Left ventricle myocardium superior (tissue), 1 donor: ENCODE measurements at regions of chr6 and their contacts with region 1.

Region 1: GRCh38 chr6:135145063-135145800 is 35.9 kb upstream of the MYB start:
- DNase-seq: no peak
- ATAC-seq: no peak

Region 2: DNA sequence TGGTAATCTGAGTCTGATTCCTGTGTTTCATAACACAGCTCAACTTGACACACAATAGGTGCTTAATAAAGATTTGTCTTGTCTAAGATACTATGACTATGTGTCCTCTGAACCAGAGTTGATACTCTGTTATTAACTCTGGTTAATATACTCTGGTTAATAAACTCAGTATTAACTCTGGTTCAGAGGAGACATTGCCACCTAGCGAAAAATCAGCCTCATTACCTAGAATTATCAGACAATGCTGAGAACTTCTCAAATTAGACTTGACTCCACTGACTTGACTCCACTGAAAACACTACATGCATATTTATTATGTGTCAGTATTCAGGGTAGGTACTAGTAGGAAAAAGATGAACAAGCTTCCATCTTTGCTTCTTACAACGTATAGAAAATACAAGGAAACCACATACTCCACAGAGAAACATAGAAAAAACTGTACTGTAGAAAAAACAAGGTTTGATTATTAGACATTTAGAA is 278.5 kb after region 1 on chr6:
- intact Hi-C with region 1: loop called (anchors 10 kb)
- DNase-seq: no peak
- ATAC-seq: peak; percentile 57